Adrenal gland (tissue), 19 donors: ENCODE measurements at regions of chr2 and their contacts with region 1.

Region 1: DNA sequence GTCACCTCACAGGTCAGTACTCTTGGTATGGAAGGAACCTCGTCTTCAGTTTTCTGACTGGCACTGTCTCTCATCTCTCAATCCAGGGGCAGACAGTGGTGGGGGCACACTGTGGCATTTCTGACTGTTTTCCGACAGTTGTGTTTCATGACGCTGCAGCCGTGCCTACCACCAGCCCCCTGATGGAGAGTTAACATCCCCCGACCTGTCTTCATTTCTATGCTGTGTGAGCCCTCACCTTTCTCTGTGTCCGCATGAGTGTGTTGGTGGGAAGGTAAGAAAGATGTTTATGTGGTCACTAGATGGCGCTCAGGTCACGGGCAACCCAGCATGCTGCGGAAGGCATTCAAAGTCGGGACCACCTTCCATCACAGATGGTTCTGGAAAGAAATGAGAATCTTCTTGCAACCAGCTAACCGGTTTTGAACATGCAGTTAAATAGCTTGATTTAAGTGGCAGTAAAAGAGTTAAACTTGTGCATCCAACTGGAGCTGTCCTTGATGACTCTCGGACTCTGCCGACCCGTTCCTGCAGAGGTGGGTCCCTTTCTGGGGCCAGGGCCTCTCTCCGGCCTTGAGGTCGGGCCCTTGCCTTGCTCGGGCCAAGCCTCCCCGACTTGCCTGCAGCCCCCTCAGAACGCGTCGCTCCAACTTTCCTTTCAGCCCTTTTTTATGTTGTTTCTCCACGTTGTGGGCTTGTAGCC is 92.4 kb downstream of the DYSF start:
- DNase-seq: peak; percentile 34 to 73 (median 57)
- H3K4me3 ChIP-seq: no peak overlapping the region
- H3K27ac ChIP-seq: peak overlapping the region in 1 of 5 donors; percentile 43
- H3K4me1 ChIP-seq: peaks cover 0 to 5% of the 10 kb centered on the region in 2 donors
- H3K27me3 ChIP-seq: peaks cover 5% of the 10 kb centered on the region
- CTCF ChIP-seq: peak; percentile 54 to 85 (median 70)
- POLR2A ChIP-seq: no peak

Region 2: DNA sequence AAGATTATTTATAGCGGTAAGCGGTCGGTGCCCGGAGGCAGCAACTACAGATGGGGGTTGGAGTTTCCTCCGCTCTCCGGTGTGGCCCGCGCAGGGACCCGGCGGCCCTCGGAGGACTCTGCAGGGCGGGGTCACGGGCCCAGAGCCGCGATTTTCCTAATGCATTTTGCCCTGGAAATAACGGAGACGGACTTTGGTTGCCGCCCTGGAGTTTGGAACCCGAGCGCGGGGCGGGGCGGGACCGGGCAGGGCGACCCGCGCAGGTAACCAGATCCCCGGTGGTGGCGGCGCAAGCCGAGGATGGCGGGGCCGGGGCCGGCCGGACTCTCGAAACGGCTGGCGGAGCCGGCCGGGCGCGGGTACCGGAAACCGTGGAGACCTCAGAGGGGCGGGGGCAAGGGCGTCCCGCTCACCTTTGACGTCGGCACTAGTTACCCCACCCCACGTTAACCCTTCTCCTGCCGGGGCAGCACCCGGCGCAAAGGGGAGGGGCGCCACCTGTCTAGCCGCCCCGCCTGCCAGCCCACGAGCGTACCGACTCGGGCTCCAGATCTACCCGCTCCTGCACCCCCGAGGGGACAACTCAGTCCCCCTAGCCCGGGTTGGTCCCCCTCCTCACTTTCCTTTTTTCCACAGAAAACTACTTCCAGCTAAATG is 599.0 kb after region 1 on chr2:
- intact Hi-C with region 1: loop called (anchors 5 kb)
- DNase-seq: peak in 2 of 7 donors; percentile 17 to 54
- H3K4me3 ChIP-seq: peak overlapping the region in 1 of 4 donors; percentile 46
- H3K27ac ChIP-seq: no peak overlapping the region
- H3K4me1 ChIP-seq: peaks cover 36 to 47% of the 10 kb centered on the region in 2 donors
- H3K27me3 ChIP-seq: peaks cover 49% of the 10 kb centered on the region
- CTCF ChIP-seq: no peak
- POLR2A ChIP-seq: no peak

Region 3: GRCh38 chr2:72150157-72150865 is 604.6 kb after region 1 on chr2:
- intact Hi-C with region 1: loop called in 1 of 2 experiments (anchors 5 kb)
- DNase-seq: peak; percentile 73 to 89 (median 84)
- H3K4me3 ChIP-seq: peak overlapping the region in 1 of 4 donors; percentile 58
- H3K27ac ChIP-seq: no peak overlapping the region
- H3K4me1 ChIP-seq: peaks cover 31 to 32% of the 10 kb centered on the region in 2 donors
- H3K27me3 ChIP-seq: peaks cover 36% of the 10 kb centered on the region
- CTCF ChIP-seq: peak; percentile 85 to 92 (median 89)
- POLR2A ChIP-seq: no peak

Region 4: GRCh38 chr2:72745679-72746368 is 1200.1 kb after region 1 on chr2:
- intact Hi-C with region 1: loop called in 1 of 2 experiments (anchors 5 kb)
- DNase-seq: peak in 1 of 7 donors; percentile 26
- H3K4me3 ChIP-seq: no peak overlapping the region
- H3K27ac ChIP-seq: no peak overlapping the region
- H3K4me1 ChIP-seq: peaks cover 7 to 8% of the 10 kb centered on the region in 2 donors
- H3K27me3 ChIP-seq: no peaks in the 10 kb centered on the region
- CTCF ChIP-seq: peak; percentile 48 to 84 (median 70)
- POLR2A ChIP-seq: no peak